Common myeloid progenitor, CD34-positive (primary cell): ENCODE measurements at regions of chr12 and their contacts with region 1.

Region 1: GRCh38 chr12:50220363-50220995 is 53.3 kb upstream of the CERS5 start:
- DNase-seq: peak in 2 of 3 donors; percentile 31 to 49
- H3K4me3 ChIP-seq: peak overlapping the region in 6 of 7 experiments; percentile 50 to 93 (median 69)
- H3K27ac ChIP-seq: peak overlapping the region; percentile 30 to 77
- H3K4me1 ChIP-seq: peaks cover 18 to 45% (median 27%) of the 10 kb centered on the region in 4 experiments
- H3K27me3 ChIP-seq: no peaks in the 10 kb centered on the region

Region 2: DNA sequence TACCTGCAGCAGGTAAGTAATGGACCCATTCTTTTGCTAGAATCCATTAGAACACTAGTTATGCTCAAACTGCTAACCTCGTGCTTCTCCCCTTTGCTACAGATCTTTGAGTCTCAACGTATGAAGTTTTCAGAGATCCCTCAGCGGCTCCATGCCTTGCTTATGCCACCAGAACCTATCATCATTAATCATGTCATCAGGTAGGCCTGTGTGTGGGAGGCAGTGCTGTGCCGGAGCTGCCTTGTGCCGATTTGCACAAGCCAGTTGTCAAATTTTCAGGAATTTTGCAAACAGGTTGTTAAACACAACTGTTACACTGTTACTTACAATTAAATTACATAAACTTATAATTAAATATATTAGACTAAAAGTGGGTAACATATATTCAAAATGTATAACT is 130.1 kb before region 1 on chr12:
- CTCF ChIA-PET with region 1: no interaction called
- POLR2A ChIA-PET with region 1: no interaction called
- DNase-seq: no peak
- H3K4me3 ChIP-seq: no peak overlapping the region
- H3K27ac ChIP-seq: no peak overlapping the region
- H3K4me1 ChIP-seq: peaks cover 4 to 6% (median 5%) of the 10 kb centered on the region in 4 experiments
- H3K27me3 ChIP-seq: no peaks in the 10 kb centered on the region

Region 3: DNA sequence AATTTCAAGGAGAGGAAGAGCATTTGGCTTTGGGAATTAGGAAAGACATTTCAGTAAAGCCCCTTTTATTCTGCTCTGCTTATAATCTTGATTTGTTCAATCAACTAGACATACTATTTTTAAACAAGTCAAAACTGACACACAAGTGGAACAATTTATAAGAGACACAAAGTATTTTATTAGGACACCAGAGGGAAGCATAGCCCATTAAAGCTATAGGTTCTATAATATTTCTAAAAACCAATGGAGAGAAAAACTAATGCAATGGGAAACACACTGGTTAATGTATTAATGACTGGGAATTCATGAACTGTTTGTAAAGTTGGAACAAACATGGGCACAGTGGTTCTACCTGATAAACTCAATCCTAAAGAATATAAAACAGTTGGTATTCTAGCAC is 38.0 kb before region 1 on chr12:
- CTCF ChIA-PET with region 1: no interaction called
- POLR2A ChIA-PET with region 1: no interaction called
- DNase-seq: peak in 2 of 3 donors; percentile 6 to 12
- H3K4me3 ChIP-seq: no peak overlapping the region
- H3K27ac ChIP-seq: no peak overlapping the region
- H3K4me1 ChIP-seq: no peaks in the 10 kb centered on the region
- H3K27me3 ChIP-seq: no peaks in the 10 kb centered on the region

Region 4: GRCh38 chr12:50283229-50283923 is 62.9 kb after region 1 on chr12 and contains the start of gene LIMA1:
- CTCF ChIA-PET with region 1: interaction called, 11 read pairs
- POLR2A ChIA-PET with region 1: no interaction called
- DNase-seq: peak; percentile 86 to 95 (median 91)
- H3K4me3 ChIP-seq: peak within 1 kb of the TSS; percentile 84 to 99 (median 94)
- H3K27ac ChIP-seq: peak within 1 kb of the TSS; percentile 67 to 81
- H3K4me1 ChIP-seq: peaks cover 3 to 19% (median 14%) of the 10 kb centered on the region in 4 experiments
- H3K27me3 ChIP-seq: no peaks in the 10 kb centered on the region